ENCODE measurements at regions of chr10 and their contacts with region 1.

Region 1: DNA sequence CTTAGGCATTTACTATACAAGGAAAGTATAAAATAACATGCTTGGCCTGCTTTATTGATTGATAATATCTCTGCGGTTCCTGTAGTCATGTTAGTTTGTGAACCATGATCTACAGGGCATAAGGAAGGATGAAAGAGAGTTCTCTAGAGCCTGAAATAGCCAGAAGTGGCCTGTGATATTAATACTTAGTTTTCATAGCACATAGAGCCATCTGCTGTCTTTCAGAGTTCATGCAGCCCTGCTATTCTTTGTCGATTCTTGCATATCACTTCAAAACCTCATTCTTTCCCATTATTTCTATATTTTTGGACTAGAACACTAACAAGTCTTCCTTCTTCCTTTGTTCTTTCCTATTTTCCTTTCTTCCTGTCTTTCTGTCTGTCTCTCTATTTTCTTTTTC is 26.4 kb upstream of the PRKG1 start:
- DNase-seq: no peak
- ATAC-seq: no peak
- H3K4me3 ChIP-seq: no peak overlapping the region
- H3K27ac ChIP-seq: no peak overlapping the region
- H3K4me1 ChIP-seq: peaks cover 17 to 49% of the 10 kb centered on the region in 2 donors
- H3K27me3 ChIP-seq: no peaks in the 10 kb centered on the region
- CTCF ChIP-seq: peak in 1 of 5 experiments; percentile 15
- POLR2A ChIP-seq: no peak

Region 2: GRCh38 chr10:50951365-50951764 is 96.5 kb before region 1 on chr10:
- in situ Hi-C with region 1: no loop called
- intact Hi-C with region 1: no loop called
- DNase-seq: no peak
- ATAC-seq: no peak
- H3K4me3 ChIP-seq: no peak overlapping the region
- H3K27ac ChIP-seq: no peak overlapping the region
- H3K4me1 ChIP-seq: peaks cover 0 to 7% of the 10 kb centered on the region in 2 donors
- H3K27me3 ChIP-seq: no peaks in the 10 kb centered on the region
- CTCF ChIP-seq: no peak
- POLR2A ChIP-seq: no peak

Region 3: DNA sequence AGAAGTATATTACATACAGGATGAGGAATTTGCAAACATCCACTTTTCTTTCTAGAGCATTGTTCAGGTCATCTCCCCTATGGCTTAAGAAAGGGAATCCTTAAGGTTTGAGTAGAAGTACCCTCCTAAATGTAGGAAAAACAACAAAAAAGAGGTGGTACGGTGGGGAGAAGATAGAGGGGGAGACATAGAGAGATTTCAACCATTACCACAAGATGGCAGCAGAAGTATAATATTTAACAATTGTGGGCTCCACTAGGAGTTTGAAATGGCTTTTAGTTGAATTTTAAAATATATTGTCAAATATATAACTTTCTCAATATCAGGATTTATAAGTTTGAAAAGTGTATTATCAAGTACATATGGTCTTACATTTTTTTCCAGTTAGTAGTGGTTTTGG is 46.3 kb before region 1 on chr10:
- in situ Hi-C with region 1: no loop called
- intact Hi-C with region 1: loop called (anchors 5 kb)
- DNase-seq: no peak
- ATAC-seq: peak; percentile 50 to 72
- H3K4me3 ChIP-seq: no peak overlapping the region
- H3K27ac ChIP-seq: peak overlapping the region in 2 of 4 donors; percentile 1 to 25
- H3K4me1 ChIP-seq: peaks cover 43 to 65% of the 10 kb centered on the region in 2 donors
- H3K27me3 ChIP-seq: no peaks in the 10 kb centered on the region
- CTCF ChIP-seq: peak; percentile 45 to 66 (median 53)
- POLR2A ChIP-seq: no peak

Region 4: DNA sequence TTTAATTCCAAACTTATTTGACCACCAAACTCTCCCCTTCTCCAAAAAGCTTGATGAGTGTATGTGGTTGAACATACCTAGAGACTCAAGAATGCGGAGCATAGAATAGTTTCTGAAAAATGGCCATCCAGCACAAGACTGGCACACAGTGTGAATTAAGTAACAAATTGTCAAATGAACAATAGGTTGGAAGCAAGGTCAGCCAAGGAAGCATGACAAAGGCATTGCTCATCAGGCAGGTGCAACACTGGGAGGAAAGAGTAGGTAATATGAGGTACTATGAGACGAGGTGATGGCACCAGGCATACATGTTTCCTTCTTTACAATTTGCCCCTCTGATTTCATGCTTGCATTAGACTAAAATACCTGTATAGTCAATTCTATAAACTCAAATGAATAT is 1339.9 kb after region 1 on chr10:
- in situ Hi-C with region 1: no loop called
- intact Hi-C with region 1: no loop called
- DNase-seq: no peak
- ATAC-seq: no peak
- H3K4me3 ChIP-seq: no peak overlapping the region
- H3K27ac ChIP-seq: no peak overlapping the region
- H3K4me1 ChIP-seq: peaks cover 3 to 5% of the 10 kb centered on the region in 2 donors
- H3K27me3 ChIP-seq: no peaks in the 10 kb centered on the region
- CTCF ChIP-seq: no peak
- POLR2A ChIP-seq: no peak

Measured in gastrocnemius medialis (tissue), 4 donors.